Natural killer cell (primary cell): ENCODE measurements at regions of chr7 and their contacts with region 1.

Region 1: GRCh38 chr7:135938563-135938962 is 38.6 kb downstream of the MTPN start:
- DNase-seq: no peak
- ATAC-seq: no peak
- H3K4me3 ChIP-seq: no peak overlapping the region
- H3K4me3 Mint-ChIP-seq: peak overlapping the region; percentile 43
- H3K27ac ChIP-seq: no peak overlapping the region
- H3K27ac Mint-ChIP-seq: peak overlapping the region; percentile 63 to 73
- H3K4me1 ChIP-seq: peaks cover 10% of the 10 kb centered on the region
- H3K4me1 Mint-ChIP-seq: peaks cover 75 to 87% of the 10 kb centered on the region in 2 donors
- H3K27me3 ChIP-seq: no peaks in the 10 kb centered on the region
- H3K27me3 Mint-ChIP-seq: no peaks in the 10 kb centered on the region
- CTCF ChIP-seq: no peak

Region 2: DNA sequence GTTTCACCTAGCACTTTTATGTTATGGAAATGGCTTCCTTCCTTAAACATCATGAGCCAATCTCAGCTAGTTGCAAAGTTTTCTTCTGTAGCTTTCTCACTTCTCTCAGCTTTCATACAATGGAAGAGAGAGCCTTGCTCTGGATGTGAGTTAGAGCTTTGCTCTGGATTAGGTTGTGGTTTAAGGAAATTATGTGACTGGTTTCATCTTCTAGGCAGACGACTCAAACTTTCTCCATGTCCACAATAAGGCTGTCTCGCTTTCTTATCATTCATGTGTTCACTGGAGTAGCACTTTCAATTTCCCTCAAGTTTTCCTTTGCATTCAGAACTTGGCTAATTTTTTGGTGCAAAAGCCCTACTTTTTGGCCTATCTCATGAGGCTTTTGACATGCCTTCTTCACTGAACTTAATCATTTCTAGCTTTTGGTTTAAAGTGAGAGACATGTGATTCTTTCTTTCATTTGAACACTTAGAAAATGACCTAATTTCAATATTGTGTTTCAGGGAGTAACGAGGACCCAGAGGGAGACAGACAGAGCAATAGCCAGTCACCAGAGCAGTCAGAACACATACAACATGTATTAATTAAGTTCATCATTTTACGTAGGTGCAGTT is 478.5 kb before region 1 on chr7:
- intact Hi-C with region 1: no loop called
- DNase-seq: no peak
- ATAC-seq: peak in 1 of 3 donors; percentile 67
- H3K4me3 ChIP-seq: no peak overlapping the region
- H3K4me3 Mint-ChIP-seq: no peak overlapping the region
- H3K27ac ChIP-seq: no peak overlapping the region
- H3K27ac Mint-ChIP-seq: peak overlapping the region; percentile 24 to 25
- H3K4me1 ChIP-seq: no peaks in the 10 kb centered on the region
- H3K4me1 Mint-ChIP-seq: peaks cover 70 to 76% of the 10 kb centered on the region in 2 donors
- H3K27me3 ChIP-seq: no peaks in the 10 kb centered on the region
- H3K27me3 Mint-ChIP-seq: no peaks in the 10 kb centered on the region
- CTCF ChIP-seq: no peak

Region 3: DNA sequence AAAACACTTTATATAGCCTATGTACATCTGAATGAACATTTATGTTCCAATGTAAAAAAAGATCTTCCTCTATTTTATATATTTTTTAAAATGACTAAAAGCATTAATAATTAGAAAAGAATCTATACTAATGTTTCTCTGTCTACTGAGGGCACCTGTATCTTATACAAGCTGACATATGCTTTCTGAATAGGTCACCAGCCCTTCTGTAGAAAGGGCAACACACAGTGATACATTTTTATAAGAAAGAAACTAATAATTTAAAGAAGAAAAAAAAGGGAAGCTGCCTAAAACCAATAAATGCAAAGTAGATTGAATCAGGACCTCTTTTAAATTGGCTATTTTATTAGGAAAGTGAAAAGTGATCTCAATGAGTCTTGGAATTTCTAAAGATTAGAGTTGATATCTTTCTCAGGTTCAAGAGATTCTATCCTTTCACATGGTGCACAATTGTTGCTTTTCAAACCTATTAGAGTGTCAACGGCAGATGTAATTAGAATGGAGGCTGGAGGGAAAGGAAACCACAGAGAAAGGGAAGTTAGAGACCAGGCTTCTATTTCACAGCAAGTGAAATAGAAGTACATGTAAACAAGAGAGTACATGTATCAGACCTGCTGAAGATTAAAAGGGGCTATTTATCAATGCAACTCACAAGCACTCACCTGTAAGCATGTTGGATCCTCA is 32.3 kb after region 1 on chr7:
- intact Hi-C with region 1: loop called (anchors 5 kb)
- DNase-seq: no peak
- ATAC-seq: peak in 2 of 3 donors; percentile 41 to 45
- H3K4me3 ChIP-seq: no peak overlapping the region
- H3K4me3 Mint-ChIP-seq: peak overlapping the region; percentile 21
- H3K27ac ChIP-seq: peak overlapping the region; percentile 49
- H3K27ac Mint-ChIP-seq: peak overlapping the region; percentile 20 to 76
- H3K4me1 ChIP-seq: peaks cover 14% of the 10 kb centered on the region
- H3K4me1 Mint-ChIP-seq: peaks cover 83 to 86% of the 10 kb centered on the region in 2 donors
- H3K27me3 ChIP-seq: no peaks in the 10 kb centered on the region
- H3K27me3 Mint-ChIP-seq: no peaks in the 10 kb centered on the region
- CTCF ChIP-seq: no peak

Region 4: GRCh38 chr7:136086712-136087111 is 148.1 kb after region 1 on chr7:
- intact Hi-C with region 1: no loop called
- DNase-seq: peak in 1 of 2 donors; percentile 56
- ATAC-seq: peak; percentile 96 to 100 (median 99)
- H3K4me3 ChIP-seq: peak overlapping the region; percentile 12
- H3K4me3 Mint-ChIP-seq: peak overlapping the region; percentile 78
- H3K27ac ChIP-seq: no peak overlapping the region
- H3K27ac Mint-ChIP-seq: peak overlapping the region; percentile 5 to 52
- H3K4me1 ChIP-seq: no peaks in the 10 kb centered on the region
- H3K4me1 Mint-ChIP-seq: no peaks in the 10 kb centered on the region
- H3K27me3 ChIP-seq: no peaks in the 10 kb centered on the region
- H3K27me3 Mint-ChIP-seq: peaks cover 0 to 2% of the 10 kb centered on the region in 2 donors
- CTCF ChIP-seq: no peak